Panc1 (cell line): ENCODE measurements at regions of chr18 and their contacts with region 1.

Region 1: DNA sequence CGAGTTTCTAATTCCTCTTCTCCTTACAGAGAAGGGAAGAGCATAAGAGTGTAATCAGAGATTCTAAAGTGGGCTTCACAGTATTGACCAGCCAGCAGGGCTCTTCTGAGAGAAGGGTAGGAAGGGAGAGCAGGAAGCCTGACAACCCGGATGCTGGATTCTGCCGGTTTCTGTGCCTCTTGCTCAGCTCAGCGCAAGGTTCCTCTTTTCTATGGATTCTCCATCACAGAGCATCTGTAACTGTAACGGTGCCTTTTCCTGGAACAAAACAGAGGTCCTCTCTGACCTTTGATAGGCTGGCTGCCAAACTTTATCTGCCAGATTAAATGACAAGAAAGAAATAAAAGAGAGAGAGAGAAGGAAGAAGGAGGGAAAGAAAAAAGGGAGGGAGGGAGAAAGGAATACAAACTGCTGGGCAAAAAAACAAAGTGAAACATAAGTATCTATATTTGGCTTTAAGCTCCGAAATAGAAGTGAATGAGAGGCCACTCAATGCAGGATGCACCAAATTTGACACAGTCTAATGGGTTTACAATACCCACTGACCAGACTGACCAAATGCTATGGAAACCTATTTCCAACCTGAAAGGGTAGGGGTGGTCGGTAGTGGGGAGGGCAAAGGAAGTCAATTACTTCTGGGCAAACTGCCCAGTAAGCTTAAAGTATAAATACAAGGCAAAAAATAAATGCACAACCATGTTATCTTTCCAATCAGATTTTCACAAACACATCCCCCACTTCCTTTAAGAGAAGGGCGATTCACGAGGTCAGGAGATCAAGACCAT is 59.2 kb downstream of the PIEZO2 start:
- DNase-seq: no peak
- ATAC-seq: no peak
- H3K4me3 ChIP-seq: no peak overlapping the region
- H3K27ac ChIP-seq: no peak overlapping the region
- H3K4me1 ChIP-seq: no peaks in the 10 kb centered on the region
- H3K27me3 ChIP-seq: no peaks in the 10 kb centered on the region
- CTCF ChIP-seq: no peak

Region 2: GRCh38 chr18:10900435-10900834 is 189.7 kb before region 1 on chr18:
- CTCF ChIA-PET with region 1: no interaction called
- POLR2A ChIA-PET with region 1: no interaction called
- in situ Hi-C with region 1: no loop called
- intact Hi-C with region 1: no loop called
- DNase-seq: no peak
- ATAC-seq: no peak
- H3K4me3 ChIP-seq: no peak overlapping the region
- H3K27ac ChIP-seq: no peak overlapping the region
- H3K4me1 ChIP-seq: no peaks in the 10 kb centered on the region
- H3K27me3 ChIP-seq: no peaks in the 10 kb centered on the region
- CTCF ChIP-seq: no peak

Region 3: DNA sequence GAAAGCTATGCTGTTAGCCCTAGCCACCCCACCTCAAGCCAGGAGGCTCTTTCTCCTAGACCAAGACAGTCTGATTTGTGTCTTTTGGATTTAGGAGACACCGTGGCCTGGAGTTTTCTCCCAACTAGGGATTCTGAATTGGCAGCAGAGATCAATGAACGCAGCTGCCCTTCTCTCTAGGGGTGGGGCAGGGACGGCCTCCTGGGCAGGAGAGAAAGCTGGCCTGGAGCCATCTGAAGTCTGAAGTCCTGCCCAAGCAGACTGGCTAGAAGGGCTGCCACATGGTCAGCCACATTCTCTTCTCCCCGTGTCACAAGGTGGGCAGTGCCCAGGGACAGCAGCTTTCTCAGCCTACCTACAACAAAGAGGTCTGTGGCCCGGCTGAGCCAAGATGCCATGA is 14.2 kb after region 1 on chr18:
- CTCF ChIA-PET with region 1: no interaction called
- POLR2A ChIA-PET with region 1: interaction called, 11 read pairs
- in situ Hi-C with region 1: no loop called
- intact Hi-C with region 1: no loop called
- DNase-seq: no peak
- ATAC-seq: no peak
- H3K4me3 ChIP-seq: no peak overlapping the region
- H3K27ac ChIP-seq: no peak overlapping the region
- H3K4me1 ChIP-seq: no peaks in the 10 kb centered on the region
- H3K27me3 ChIP-seq: no peaks in the 10 kb centered on the region; the same call in 1 of the 2 replicates
- CTCF ChIP-seq: no peak